Activated naive CD8-positive, alpha-beta T cell treated with anti-CD3 and anti-CD28 coated beads, Interleukin-2, amount 10 ng/mL, durations not matched to agents 7 days and 5 days (primary cell): ENCODE measurements at regions of chr15 and their contacts with region 1.

Region 1: DNA sequence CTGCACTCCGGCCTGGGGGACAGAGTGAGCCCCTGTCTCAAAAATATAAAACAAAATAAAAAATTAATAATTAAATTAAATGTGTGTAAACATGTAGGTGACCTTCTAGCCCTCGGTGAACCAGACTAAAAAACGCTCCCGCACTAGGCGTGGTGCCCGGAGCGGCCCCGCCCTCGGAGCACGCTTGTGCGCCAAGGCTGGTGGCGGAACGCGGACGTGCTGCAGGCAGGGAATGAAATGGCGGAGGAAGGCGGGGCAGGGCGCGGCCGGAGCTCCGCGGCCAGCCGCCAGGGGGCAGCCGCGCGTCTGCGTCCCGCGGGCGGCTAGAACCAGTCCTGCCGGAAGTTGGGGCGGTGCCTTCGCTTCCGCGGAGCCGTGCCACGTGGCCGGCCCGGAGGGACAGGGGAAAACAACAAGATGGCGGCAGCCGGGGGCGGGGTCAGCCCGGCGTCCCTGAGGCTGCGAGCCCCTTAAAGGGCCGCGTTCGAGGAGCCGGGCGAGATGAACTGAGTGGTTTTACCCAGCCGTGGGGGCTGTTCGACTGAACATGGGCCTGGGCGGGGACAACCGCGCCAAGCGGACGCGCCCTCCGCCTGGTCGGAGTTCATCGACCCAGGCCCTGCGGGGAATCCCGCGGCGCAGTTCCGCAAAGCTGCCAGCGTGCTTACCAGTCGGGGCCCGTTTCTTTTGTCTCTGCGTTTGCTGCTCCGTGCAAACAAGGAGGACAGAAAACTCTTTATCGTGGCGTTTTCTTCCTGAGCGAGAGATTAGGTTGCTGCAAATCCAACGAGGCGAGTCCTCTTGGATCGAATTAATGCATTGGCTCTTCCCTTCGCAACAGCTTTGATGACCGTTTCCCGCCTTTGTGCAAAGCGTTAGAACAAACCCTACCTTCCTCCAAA is 90.9 kb upstream of the CHD2 start:
- DNase-seq: peak; percentile 99
- ATAC-seq: peak; percentile 85
- H3K4me3 Mint-ChIP-seq: peak overlapping the region; percentile 92
- H3K27ac Mint-ChIP-seq: peak overlapping the region; percentile 85
- H3K4me1 Mint-ChIP-seq: peaks cover 30% of the 10 kb centered on the region
- H3K27me3 Mint-ChIP-seq: no peaks in the 10 kb centered on the region

Region 2: DNA sequence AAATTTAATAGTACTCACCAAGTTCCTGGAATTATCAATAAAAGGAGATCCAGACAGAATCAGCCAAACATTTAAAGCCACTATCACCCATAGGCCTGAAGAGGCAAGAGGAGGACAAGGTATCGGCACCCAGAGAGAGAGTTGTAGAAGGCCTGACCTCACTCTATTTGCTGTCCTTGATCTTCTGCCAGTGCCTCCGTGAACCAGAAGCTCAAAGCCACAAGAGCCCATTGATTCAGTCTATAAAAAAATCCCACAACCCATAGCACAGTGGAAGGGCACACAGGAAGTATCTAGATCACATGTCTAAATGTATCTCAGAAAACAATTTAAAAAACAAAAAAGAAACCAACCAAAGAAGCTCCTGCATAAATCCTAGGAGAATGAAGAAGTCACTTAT is 85.1 kb before region 1 on chr15:
- POLR2A ChIA-PET with region 1: no interaction called
- DNase-seq: no peak
- ATAC-seq: peak; percentile 50
- H3K4me3 Mint-ChIP-seq: peak overlapping the region; percentile 15
- H3K27ac Mint-ChIP-seq: no peak overlapping the region
- H3K4me1 Mint-ChIP-seq: peaks cover 6% of the 10 kb centered on the region
- H3K27me3 Mint-ChIP-seq: peaks cover 3% of the 10 kb centered on the region

Region 3: DNA sequence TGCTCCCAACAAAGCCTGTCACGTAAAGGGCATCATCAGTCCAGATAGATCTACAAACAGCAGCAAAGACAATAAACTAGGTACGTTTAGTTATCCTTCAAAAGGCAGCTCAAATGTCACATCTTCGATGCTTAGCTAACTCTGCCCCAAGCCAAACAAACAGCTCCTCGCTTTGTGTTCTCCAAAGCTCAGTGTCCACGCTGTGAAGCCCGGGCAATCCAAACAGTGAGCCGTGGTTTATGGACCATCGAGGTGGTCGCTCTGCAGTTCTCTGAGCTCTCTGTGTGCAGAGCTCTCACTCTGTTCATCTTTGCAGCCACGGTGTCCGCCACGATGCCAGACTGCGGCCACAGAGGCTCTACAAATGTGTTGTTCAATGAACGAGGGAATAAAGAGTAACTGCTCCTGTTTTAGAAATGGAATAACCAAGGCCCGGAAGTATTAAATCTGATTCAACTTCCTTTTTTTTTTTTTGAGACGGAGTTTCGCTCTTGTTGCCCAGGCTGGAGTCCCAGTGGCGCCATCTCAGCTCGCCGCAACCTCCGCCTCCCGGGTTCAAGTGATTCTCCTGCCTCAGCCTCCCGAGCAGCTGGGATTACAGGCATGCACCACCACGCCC is 36.5 kb before region 1 on chr15:
- POLR2A ChIA-PET with region 1: no interaction called
- DNase-seq: no peak
- ATAC-seq: no peak
- H3K4me3 Mint-ChIP-seq: no peak overlapping the region
- H3K27ac Mint-ChIP-seq: no peak overlapping the region
- H3K4me1 Mint-ChIP-seq: no peaks in the 10 kb centered on the region
- H3K27me3 Mint-ChIP-seq: no peaks in the 10 kb centered on the region

Region 4: GRCh38 chr15:92820236-92821021 is 11.2 kb after region 1 on chr15:
- POLR2A ChIA-PET with region 1: interaction called, 77 read pairs
- DNase-seq: peak; percentile 86
- ATAC-seq: peak; percentile 82
- H3K4me3 Mint-ChIP-seq: peak overlapping the region; percentile 87
- H3K27ac Mint-ChIP-seq: peak overlapping the region; percentile 83
- H3K4me1 Mint-ChIP-seq: peaks cover 47% of the 10 kb centered on the region
- H3K27me3 Mint-ChIP-seq: no peaks in the 10 kb centered on the region

Region 5: GRCh38 chr15:92845126-92845508 is 35.9 kb after region 1 on chr15:
- POLR2A ChIA-PET with region 1: interaction called, 24 read pairs
- DNase-seq: no peak
- ATAC-seq: peak; percentile 6
- H3K4me3 Mint-ChIP-seq: peak overlapping the region; percentile 81
- H3K27ac Mint-ChIP-seq: peak overlapping the region; percentile 95
- H3K4me1 Mint-ChIP-seq: peaks cover 50% of the 10 kb centered on the region
- H3K27me3 Mint-ChIP-seq: no peaks in the 10 kb centered on the region

Region 6: DNA sequence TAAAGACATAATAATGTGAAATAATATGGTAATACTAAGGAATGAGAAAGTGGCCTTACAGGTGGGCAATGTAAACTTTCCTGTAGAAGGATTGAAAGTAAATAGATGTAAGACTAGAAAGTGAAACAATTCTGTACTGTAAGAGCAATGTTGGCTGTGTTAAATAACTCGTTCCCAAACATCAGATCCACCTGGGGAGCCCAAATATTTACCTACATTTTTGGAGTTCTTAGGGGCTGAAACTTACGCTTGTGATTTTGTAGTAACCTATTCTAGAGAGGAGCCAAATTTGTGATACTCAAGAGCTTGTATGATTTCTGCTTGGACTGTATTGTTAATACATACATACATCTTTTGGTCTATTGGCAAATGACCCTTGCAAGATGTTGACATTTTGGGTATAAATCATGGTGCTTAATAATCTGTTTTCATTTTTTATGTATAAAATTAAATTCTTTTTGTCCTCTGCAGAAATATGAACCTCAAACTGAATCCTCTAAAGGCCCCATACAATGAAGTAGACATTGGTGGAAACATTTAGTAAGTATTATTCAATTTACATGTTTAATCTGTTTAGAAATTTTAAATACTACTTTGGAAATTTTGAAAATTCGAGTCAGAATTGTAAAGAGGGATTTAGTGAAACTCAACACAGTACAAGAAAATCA is 82.4 kb after region 1 on chr15:
- POLR2A ChIA-PET with region 1: interaction called, 56 read pairs
- DNase-seq: no peak
- ATAC-seq: no peak
- H3K4me3 Mint-ChIP-seq: peak overlapping the region; percentile 73
- H3K27ac Mint-ChIP-seq: peak overlapping the region; percentile 14
- H3K4me1 Mint-ChIP-seq: peaks cover 65% of the 10 kb centered on the region
- H3K27me3 Mint-ChIP-seq: no peaks in the 10 kb centered on the region

Region 7: GRCh38 chr15:92917606-92918407 is 108.6 kb after region 1 on chr15:
- POLR2A ChIA-PET with region 1: interaction called, 71 read pairs
- DNase-seq: peak; percentile 86
- ATAC-seq: peak; percentile 28
- H3K4me3 Mint-ChIP-seq: peak overlapping the region; percentile 62
- H3K27ac Mint-ChIP-seq: peak overlapping the region; percentile 78
- H3K4me1 Mint-ChIP-seq: peaks cover 73% of the 10 kb centered on the region
- H3K27me3 Mint-ChIP-seq: no peaks in the 10 kb centered on the region